ENCODE measurements at regions of chr9 and their contacts with region 1.

Region 1: DNA sequence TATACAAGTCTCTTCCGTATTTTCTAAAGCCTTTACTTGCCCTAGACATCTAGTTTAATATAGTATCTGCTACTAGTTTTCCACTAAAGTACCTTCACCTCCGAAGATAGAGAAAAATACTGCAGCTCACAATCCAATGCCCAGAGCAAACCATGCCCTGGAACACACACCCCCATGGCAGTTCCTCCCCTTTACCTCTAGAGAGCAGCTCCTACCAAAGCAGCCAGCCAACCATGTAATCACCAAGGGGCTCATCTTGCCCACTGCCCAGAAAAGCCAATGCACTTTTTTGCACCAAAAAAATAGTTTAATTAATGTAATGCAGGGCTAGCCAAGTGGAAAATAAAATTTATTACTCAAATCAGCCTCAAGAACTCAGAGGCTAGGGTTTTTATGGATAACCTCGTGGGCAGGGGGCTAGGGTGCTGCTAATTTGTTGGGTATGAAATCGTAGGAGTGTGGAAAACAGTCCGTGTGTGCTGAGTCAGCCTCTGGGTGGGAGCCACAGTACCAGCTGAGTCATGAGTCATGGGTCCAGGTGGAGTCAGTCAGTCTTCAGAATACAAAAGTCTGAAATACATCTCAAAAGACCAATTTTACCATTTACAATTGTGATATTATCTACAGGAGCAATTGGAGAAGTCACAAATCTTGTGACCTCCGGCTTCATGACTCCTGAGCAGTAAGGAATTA is 120.1 kb upstream of the ACO1 start:
- DNase-seq: peak in 1 of 2 experiments; percentile 10
- H3K4me3 ChIP-seq: no peak overlapping the region
- H3K27ac ChIP-seq: no peak overlapping the region
- H3K4me1 ChIP-seq: no peaks in the 10 kb centered on the region; a peak in 2 of 7 replicates
- H3K27me3 ChIP-seq: no peaks in the 10 kb centered on the region; a peak in 1 of 7 replicates
- CTCF ChIP-seq: peak; percentile 65 to 78 (median 75)
- EP300 ChIP-seq: no peak
- POLR2A ChIP-seq: no peak
- RAD21 ChIP-seq: peak; percentile 81 to 86

Region 2: DNA sequence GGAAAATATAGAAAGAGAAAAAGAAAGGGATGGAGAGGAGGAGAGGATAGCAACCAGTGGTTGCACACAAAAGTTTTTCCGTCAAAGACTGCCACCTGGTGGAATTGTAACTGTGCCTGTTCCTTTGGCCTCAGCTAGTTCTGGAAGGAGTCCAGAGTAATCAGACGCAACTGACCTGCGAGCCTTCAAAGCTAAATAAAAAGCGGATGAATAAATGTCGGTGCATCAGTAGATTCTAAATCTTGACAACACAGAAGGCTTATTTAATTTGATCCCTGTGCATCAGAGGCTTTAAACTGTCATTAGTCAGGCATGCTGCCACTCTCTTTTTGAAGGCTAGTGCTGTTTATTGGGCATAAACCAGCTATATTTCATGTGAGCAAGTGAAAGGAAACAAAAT is 12.8 kb before region 1 on chr9:
- CTCF ChIA-PET with region 1: interaction called, 28 read pairs
- POLR2A ChIA-PET with region 1: no interaction called
- DNase-seq: peak; percentile 33 to 61
- H3K4me3 ChIP-seq: no peak overlapping the region
- H3K27ac ChIP-seq: no peak overlapping the region
- H3K4me1 ChIP-seq: no peaks in the 10 kb centered on the region
- H3K27me3 ChIP-seq: no peaks in the 10 kb centered on the region
- CTCF ChIP-seq: peak; percentile 38 to 83 (median 80)
- EP300 ChIP-seq: no peak
- POLR2A ChIP-seq: no peak
- RAD21 ChIP-seq: peak; percentile 94

Region 3: DNA sequence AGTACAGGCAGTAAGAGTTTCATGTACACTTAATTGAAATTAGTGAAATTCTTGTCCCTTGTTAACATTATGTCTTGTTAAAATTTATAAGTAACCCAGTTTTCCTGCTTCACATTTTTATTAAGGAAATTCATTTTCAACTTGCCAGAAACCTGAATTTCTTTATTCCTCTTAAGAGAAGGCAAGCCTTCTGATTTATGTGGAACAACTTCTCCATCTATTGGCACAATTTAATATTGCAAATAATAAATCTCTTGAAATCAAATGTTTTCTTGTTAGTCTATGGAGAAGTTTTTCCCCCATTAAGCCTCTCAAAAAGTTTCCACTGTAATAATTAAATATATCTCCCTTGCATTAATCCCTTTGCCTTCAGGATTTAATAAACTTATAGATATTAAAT is 86.4 kb after region 1 on chr9:
- CTCF ChIA-PET with region 1: interaction called, 30 read pairs
- POLR2A ChIA-PET with region 1: no interaction called
- DNase-seq: no peak
- H3K4me3 ChIP-seq: no peak overlapping the region
- H3K27ac ChIP-seq: no peak overlapping the region
- H3K4me1 ChIP-seq: peaks cover 0 to 11% (median 2%) of the 10 kb centered on the region in 4 experiments; a peak in 4 of 7 replicates
- H3K27me3 ChIP-seq: no peaks in the 10 kb centered on the region
- CTCF ChIP-seq: peak in 1 of 3 experiments; percentile 3; a peak in 1 of 4 replicates
- EP300 ChIP-seq: no peak
- POLR2A ChIP-seq: no peak
- RAD21 ChIP-seq: peak in 1 of 2 experiments; percentile 67; a peak in 3 of 4 replicates

Measured in H1 (cell line).